ENCODE measurements at regions of chr7 and their contacts with region 1.

Region 1: GRCh38 chr7:5237286-5237685 is 45.5 kb upstream of the SLC29A4 start:
- DNase-seq: no peak
- H3K4me3 ChIP-seq: no peak overlapping the region
- H3K27ac ChIP-seq: no peak overlapping the region
- H3K4me1 ChIP-seq: peaks cover 0 to 4% (median 1%) of the 10 kb centered on the region in 4 experiments; a peak in 2 of 7 replicates
- H3K27me3 ChIP-seq: peaks cover 0 to 9% (median 0%) of the 10 kb centered on the region in 4 experiments; a peak in 3 of 7 replicates
- CTCF ChIP-seq: no peak
- EP300 ChIP-seq: no peak
- POLR2A ChIP-seq: no peak
- RAD21 ChIP-seq: no peak

Region 2: DNA sequence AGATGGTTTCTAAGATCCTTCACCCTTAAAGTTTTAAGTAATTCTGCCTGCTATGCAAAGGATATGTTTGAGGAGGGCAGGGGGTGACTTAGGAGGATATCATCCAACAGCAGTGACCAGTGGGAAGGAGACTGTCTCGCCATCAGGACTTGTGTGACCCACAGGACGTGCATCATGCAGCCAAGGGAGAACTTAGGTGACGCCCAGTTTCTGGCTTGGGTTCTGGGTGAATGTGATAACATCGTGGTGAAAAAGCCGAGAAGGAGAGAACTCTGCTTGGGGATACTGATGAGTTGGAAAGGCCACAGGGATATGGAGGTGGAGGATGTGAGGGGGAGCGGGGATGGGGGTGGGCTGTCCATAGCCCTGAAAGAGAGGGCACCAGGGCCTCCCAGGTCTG is 43.4 kb before region 1 on chr7:
- CTCF ChIA-PET with region 1: no interaction called
- POLR2A ChIA-PET with region 1: no interaction called
- DNase-seq: no peak
- H3K4me3 ChIP-seq: no peak overlapping the region
- H3K27ac ChIP-seq: no peak overlapping the region
- H3K4me1 ChIP-seq: peaks cover 2 to 6% (median 2%) of the 10 kb centered on the region in 4 experiments; a peak in 3 of 7 replicates
- H3K27me3 ChIP-seq: no peaks in the 10 kb centered on the region
- CTCF ChIP-seq: no peak
- EP300 ChIP-seq: no peak
- POLR2A ChIP-seq: no peak
- RAD21 ChIP-seq: no peak

Region 3: DNA sequence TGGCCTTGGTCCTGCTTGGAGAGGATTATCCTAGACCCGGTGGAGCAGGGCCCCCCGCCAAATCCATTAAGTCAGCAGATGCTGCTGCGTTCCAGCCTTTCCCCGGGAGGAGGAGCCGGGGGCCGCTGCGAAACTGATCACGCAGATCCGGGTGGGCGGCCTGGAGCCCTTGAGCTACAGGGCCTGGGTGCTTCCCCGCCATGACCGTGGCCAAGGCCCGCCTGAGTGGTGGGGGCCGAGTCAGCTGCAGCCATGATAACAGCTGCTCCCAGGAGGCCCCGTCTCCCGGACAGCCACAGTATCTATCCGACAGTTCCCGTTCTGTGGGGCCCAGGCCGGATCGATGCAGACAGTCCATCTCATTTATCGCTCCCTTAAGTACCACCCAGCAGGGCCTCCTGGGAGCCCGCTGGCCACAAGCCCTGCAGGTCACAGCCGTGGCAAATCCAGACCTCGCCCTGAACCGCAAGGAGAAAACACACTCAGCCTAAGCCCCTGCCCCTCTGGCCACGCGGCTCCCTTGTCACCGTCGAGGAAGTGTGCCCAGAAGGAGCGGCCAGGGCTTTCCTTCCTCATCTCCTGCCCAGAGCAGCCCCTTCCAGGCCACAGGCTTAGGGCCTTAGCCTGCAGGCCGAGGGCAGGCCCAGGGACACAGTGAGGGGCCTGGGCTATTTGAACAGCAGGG is 11.1 kb after region 1 on chr7:
- CTCF ChIA-PET with region 1: interaction called, 11 read pairs
- POLR2A ChIA-PET with region 1: no interaction called
- DNase-seq: no peak
- H3K4me3 ChIP-seq: no peak overlapping the region
- H3K27ac ChIP-seq: no peak overlapping the region
- H3K4me1 ChIP-seq: peaks cover 0 to 5% (median under 1%) of the 10 kb centered on the region in 4 experiments; a peak in 5 of 7 replicates
- H3K27me3 ChIP-seq: no peaks in the 10 kb centered on the region
- CTCF ChIP-seq: no peak
- EP300 ChIP-seq: no peak
- POLR2A ChIP-seq: no peak
- RAD21 ChIP-seq: no peak

Region 4: DNA sequence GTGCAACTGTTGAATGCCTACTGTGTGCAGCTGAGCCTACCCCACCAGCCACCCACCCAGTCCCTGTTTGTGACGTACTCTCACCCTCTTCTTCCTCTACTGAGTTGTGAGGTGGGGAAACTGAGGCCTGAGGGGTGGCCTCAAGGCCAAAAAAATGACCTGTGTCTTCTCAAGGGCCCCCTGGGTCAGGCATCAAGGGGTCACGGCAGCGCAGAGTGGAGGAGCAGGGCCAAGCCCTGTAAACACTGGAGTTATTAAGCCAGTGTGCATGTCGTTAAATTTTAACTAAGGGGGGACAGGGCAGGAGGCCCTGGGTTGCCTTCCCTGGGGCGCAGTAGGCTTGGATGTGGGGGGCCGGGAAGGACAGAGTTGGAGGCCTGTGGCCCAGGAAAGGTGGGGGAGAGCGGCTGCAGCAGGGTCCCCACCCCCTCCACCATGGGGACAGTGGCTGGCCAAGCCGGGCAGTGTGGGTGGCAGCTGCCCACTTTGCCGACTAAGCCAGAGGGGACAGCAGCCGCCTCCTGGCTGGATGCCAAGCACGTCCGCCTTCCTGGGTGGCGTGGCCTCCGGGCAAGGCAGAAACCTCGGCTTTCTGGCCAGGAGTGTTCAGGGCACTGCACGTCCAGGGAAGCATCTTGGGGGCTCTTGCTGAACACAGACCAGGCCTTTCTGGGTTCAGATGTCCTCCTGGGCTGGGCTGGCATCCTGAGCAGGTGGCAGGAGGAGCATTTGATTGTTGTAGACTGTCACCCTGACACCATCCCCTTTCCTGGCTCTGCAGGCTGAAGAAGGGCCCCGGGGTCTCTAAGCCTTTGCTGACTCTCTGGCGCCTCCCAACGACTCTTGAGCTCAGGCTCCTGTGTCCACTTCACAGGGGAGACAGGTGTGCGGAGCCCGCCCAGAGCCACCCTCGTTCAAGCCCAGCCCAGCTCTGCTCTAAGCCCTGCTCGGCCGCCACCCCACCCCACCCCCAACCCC is 47.3 kb after region 1 on chr7:
- CTCF ChIA-PET with region 1: interaction called, 16 read pairs
- POLR2A ChIA-PET with region 1: interaction called, 3 read pairs
- DNase-seq: peak; percentile 49 to 82
- H3K4me3 ChIP-seq: no peak overlapping the region
- H3K27ac ChIP-seq: no peak overlapping the region
- H3K4me1 ChIP-seq: peaks cover 0 to 3% (median 3%) of the 10 kb centered on the region in 4 experiments; a peak in 5 of 7 replicates
- H3K27me3 ChIP-seq: peaks cover 0 to 16% (median 11%) of the 10 kb centered on the region in 4 experiments; a peak in 6 of 7 replicates
- CTCF ChIP-seq: peak; percentile 66 to 79 (median 78)
- EP300 ChIP-seq: no peak
- POLR2A ChIP-seq: no peak
- RAD21 ChIP-seq: peak; percentile 80 to 86

Region 5: DNA sequence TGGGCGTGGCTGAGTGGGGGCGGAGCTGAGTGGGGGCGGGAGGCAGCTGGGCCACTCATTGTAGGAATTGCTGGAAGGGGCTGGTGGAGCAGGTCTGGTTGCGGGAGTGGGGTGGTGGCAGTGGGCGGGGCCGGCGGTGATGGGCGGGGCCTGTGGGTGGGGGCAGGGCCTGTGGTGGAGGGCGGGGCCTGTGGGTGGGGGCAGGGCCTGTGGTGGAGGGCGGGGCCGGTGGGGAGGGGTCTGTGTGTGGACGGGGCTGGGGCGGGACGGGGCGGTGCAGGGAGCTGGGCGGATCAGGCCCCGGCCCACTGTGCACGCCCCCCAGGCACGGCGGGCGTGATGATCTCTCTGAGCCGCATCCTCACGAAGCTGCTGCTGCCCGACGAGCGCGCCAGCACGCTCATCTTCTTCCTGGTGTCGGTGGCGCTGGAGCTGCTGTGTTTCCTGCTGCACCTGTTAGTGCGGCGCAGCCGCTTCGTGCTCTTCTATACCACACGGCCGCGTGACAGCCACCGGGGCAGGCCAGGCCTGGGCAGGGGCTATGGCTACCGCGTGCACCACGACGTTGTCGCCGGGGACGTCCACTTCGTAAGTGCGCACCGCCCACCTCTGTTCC is 59.4 kb after region 1 on chr7:
- CTCF ChIA-PET with region 1: interaction called, 11 read pairs
- POLR2A ChIA-PET with region 1: no interaction called
- DNase-seq: peak; percentile 72 to 95
- H3K4me3 ChIP-seq: peak overlapping the region in 2 of 4 experiments; percentile 41 to 77; a peak in 4 of 8 replicates
- H3K27ac ChIP-seq: no peak overlapping the region
- H3K4me1 ChIP-seq: peaks cover 0 to 13% (median 3%) of the 10 kb centered on the region in 4 experiments; a peak in 3 of 7 replicates
- H3K27me3 ChIP-seq: peaks cover 0 to 12% (median 5%) of the 10 kb centered on the region in 4 experiments; a peak in 2 of 7 replicates
- CTCF ChIP-seq: no peak
- EP300 ChIP-seq: no peak
- POLR2A ChIP-seq: no peak
- RAD21 ChIP-seq: no peak

Region 6: DNA sequence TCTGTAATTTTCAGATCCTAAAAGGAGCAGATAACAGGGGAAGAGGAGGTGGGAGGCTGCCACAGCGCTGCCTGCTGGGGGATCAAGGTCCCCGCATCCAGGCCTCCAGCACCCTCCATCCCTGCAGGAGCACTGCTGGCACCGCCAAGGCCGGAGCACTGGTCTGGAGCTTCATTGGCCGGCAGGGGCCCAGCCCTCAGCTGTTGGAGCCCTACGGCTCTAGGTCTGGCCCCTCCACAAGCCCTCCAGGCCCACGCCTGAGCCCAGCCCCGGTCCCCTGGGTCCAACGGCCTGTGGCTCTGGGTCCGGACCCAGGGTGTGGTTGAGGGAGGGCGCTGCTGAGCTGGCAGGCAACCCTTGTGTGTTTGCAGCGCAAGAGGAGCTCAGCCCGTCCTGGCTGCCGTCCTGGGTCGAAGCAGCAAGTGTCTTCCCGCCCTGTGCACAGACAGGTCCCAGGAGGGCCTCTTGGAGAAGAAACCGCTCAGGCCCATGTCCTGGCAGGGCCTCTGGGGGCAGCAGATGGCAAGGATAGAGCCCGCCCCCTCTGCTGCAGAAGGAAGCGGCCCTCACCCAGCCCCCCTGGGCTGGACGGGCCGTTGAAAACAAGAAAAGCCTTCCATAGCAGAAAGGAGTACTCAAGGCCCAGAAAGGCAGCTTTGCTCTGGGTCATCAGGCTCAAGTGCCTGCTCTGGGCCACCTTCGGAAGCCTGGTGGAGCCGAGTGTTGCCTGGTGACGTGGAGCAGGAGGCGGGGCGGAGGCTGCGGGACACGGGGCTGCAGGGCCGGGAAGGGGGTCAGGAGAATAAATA is 240.6 kb after region 1 on chr7:
- CTCF ChIA-PET with region 1: interaction called, 10 read pairs
- POLR2A ChIA-PET with region 1: no interaction called
- DNase-seq: peak in 1 of 2 experiments; percentile 76
- H3K4me3 ChIP-seq: 0 out of 8 replicates have a peak overlapping the region, but pooled peaks of 1 of the 4 experiments have one; percentile 25
- H3K27ac ChIP-seq: no peak overlapping the region
- H3K4me1 ChIP-seq: peaks cover 0 to 16% (median 8%) of the 10 kb centered on the region in 4 experiments; a peak in 5 of 7 replicates
- H3K27me3 ChIP-seq: no peaks in the 10 kb centered on the region
- CTCF ChIP-seq: peak in 2 of 3 experiments; percentile 56 to 59; a peak in 3 of 4 replicates
- EP300 ChIP-seq: no peak
- POLR2A ChIP-seq: no peak
- RAD21 ChIP-seq: peak; percentile 39 to 49

Measured in H1 (cell line).